Activated CD4-positive, alpha-beta T cell treated with anti-CD3 and anti-CD28 coated beads, Interleukin-2, amount 10 ng/mL, durations not matched to agents 7 days and 5 days (primary cell): ENCODE measurements at regions of chr1 and their contacts with region 1.

Region 1: GRCh38 chr1:35756064-35756463 is 13.7 kb downstream of the CLSPN start:
- DNase-seq: no peak
- H3K4me3 Mint-ChIP-seq: no peak overlapping the region
- H3K27ac Mint-ChIP-seq: no peak overlapping the region
- H3K4me1 Mint-ChIP-seq: peaks cover 11% of the 10 kb centered on the region
- H3K27me3 Mint-ChIP-seq: no peaks in the 10 kb centered on the region

Region 2: GRCh38 chr1:35727434-35728040 is 28.5 kb before region 1 on chr1:
- CTCF ChIA-PET with region 1: no interaction called
- POLR2A ChIA-PET with region 1: no interaction called
- DNase-seq: no peak
- H3K4me3 Mint-ChIP-seq: no peak overlapping the region
- H3K27ac Mint-ChIP-seq: no peak overlapping the region
- H3K4me1 Mint-ChIP-seq: no peaks in the 10 kb centered on the region
- H3K27me3 Mint-ChIP-seq: no peaks in the 10 kb centered on the region

Region 3: DNA sequence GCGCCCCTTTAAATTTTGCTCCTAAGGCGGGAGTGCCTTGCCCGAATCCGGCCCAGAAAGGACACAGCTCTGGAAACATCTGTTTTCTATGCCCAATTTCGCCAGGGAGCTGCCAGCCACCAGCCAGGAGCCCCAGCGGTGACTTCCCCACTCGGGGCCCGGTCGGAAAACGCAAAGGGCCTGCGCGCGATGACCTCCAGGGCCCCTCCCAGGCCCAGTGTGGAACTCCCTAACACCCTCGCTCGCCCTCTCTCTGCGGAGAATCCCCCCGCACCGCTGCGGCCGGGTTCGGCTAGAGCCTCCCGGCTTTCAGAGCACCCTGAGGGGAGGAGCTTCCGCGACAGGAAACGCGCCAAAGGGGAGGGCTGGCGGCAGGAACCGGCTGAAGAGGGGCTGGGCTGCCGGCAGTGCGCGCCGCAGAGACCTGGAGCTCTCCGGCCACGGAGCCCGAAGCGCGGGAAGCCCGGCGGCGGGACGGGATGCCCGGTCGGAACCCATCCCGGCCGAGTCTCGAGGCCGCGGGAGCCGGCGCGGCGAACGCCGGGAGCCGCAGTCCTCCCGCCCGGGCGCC is 13.2 kb after region 1 on chr1:
- CTCF ChIA-PET with region 1: interaction called, 13 read pairs
- POLR2A ChIA-PET with region 1: interaction called, 5 read pairs
- DNase-seq: peak; percentile 90
- H3K4me3 Mint-ChIP-seq: peak overlapping the region; percentile 88
- H3K27ac Mint-ChIP-seq: peak overlapping the region; percentile 91
- H3K4me1 Mint-ChIP-seq: peaks cover 36% of the 10 kb centered on the region
- H3K27me3 Mint-ChIP-seq: no peaks in the 10 kb centered on the region